RWPE1 (cell line): ENCODE measurements at regions of chr11 and their contacts with region 1.

Region 1: GRCh38 chr11:72026090-72026489 is 27.4 kb downstream of the IL18BP start:
- DNase-seq: no peak
- H3K27ac ChIP-seq: no peak overlapping the region; the same call in 1 of the 2 replicates
- CTCF ChIP-seq: no peak

Region 2: GRCh38 chr11:72015511-72016171 is 10.4 kb before region 1 on chr11:
- CTCF ChIA-PET with region 1: interaction called, 20 read pairs
- POLR2A ChIA-PET with region 1: no interaction called
- DNase-seq: no peak
- H3K27ac ChIP-seq: peak overlapping the region; percentile 87
- CTCF ChIP-seq: no peak

Region 3: DNA sequence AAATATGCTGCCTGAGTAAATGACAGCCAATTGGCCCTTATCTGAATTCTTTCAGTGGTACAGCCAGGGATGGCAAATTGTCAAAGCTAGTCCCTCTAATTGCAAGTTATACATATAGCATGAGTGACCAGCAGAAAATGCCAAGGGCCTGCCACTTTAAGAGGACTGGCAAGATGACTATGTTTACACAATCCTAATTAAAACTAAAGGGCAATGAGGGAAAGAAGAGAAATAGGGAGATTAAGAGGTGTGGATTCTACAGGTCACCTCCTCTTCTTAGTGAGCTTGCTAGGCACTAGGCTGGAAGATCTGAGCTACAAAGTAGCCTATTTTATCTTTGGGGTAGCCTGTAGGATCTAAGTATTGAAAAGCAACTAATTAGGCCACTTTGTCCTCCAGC is 40.8 kb after region 1 on chr11:
- CTCF ChIA-PET with region 1: interaction called, 13 read pairs
- POLR2A ChIA-PET with region 1: interaction called, 3 read pairs
- DNase-seq: no peak
- H3K27ac ChIP-seq: no peak overlapping the region
- CTCF ChIP-seq: no peak

Region 4: DNA sequence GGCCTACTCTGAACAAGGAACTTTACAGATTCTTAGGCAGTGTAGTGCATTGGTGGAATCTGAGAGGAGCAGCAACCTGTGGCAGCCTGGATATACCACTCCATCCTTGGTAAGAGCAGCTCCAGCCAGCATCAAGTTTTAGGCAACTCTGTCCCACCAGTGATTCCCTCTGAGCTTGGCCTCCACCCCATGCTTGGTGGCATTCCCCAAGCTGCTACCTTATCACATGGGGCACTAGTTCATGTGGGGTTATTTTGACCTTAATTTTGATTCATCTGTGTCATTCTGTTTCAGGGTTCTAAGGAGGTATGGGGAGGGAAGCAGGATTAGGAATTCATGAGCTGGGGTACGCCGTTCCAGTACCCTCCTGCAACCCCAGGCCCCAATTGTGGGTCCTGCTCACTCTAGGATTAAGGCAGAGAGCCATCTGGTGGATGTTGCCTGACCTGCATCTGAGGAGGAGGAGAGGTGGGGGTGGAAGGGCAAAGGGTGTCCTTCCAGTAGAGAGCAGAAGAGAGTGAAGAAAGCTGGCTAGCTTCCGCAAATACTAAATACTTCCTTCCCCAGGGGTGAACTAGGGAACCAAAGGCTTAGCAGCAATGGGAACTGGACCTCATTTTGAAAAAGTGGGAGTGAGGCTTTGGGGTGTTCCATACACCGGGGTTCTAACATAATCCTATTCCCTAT is 65.1 kb after region 1 on chr11:
- CTCF ChIA-PET with region 1: interaction called, 44 read pairs
- POLR2A ChIA-PET with region 1: no interaction called
- DNase-seq: peak; percentile 75
- H3K27ac ChIP-seq: peak overlapping the region; percentile 50
- CTCF ChIP-seq: peak; percentile 78

Region 5: DNA sequence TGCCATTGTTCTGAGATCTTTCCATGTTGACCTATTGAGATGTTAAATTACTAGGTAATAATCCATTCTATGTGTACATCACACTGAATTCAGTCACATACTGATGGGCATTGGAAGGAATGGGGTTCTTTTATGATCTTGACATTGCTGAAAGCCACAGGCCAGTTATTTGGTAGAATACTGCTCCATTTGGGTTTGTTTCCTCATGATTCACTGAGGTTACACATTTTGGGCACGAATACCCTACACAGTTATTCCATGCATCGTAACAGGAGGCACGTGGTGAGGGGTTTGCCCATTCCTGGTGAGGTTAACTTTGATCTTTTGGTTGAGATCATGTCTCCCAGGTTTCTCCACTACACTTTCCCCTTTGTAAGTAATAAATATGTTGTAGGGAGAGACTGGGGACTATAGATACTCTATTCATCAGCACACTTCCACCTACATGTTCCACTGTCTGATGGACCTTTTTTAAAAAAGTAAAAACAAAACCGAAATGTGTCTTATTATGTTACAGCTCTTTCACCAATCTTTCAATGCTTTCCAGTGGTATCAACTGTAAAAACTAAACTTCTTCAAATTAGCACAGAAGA is 153.8 kb after region 1 on chr11:
- CTCF ChIA-PET with region 1: interaction called, 12 read pairs
- POLR2A ChIA-PET with region 1: no interaction called
- DNase-seq: no peak
- H3K27ac ChIP-seq: peak overlapping the region; percentile 93
- CTCF ChIP-seq: no peak

Region 6: DNA sequence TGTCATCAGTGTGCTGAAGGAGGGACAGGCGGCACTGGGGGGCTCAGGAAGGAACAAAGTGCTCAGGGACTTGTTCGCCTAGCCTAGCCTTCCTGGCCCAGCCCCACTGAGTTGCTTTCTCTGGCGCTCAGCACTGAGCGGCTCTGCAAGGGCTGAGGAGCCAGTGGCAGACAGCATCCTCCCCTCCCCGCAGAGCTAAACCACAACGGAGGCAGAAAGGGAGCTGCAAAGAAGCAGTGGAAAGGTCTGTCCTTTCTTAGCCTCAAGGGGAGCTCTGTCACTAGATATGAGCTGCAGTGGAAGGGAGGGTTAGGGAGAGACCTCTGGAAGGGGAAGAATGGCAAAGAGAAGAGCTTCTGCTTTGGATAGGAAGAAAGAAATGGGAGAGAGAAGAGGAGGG is 307.6 kb after region 1 on chr11:
- CTCF ChIA-PET with region 1: no interaction called
- POLR2A ChIA-PET with region 1: no interaction called
- DNase-seq: no peak
- H3K27ac ChIP-seq: no peak overlapping the region
- CTCF ChIP-seq: no peak

Region 7: DNA sequence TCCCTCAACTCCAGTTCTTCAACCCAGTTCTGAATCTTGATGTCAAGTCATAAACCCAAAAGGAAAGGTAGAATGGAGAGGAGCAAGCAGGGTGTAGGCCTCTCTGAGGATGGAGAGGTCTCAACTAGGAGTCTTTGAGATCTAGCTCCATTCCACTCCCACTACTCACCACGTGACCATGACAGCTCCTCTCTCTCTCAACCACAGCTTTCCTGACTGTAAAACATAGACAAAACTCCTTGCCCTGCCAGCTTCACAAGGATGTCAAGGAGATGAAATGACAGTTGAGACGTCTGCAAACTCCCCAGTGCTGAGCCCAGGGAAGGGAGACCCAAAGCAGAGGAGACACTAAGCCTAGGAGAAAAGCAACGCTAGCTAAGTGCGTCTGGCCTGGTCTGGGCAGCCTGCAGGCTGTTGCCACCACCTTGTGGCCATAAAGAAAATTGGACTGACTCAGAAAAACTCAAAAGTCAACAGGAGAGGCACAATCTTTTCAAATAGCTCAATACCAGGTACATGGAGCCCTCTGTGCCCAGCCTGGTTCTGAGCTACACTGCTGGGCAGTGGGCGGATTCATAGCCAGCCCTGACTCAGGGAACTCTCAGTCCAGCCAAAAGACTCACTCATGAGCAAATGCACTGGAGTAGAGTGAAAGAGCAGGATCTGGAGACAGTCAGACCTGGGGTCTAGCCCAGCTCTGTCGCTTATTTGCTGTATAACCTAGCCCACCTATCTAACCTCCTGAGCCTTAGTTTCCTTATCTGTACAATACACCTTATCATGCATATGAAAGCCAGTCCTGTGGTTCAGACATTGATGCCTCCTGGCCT is 404.9 kb after region 1 on chr11:
- CTCF ChIA-PET with region 1: interaction called, 14 read pairs
- POLR2A ChIA-PET with region 1: no interaction called
- DNase-seq: peak; percentile 42
- H3K27ac ChIP-seq: no peak overlapping the region
- CTCF ChIP-seq: peak; percentile 79